ENCODE measurements at regions of chr9 and their contacts with region 1.

Region 1: GRCh38 chr9:98074115-98074990 is 17.8 kb downstream of the NANS start:
- DNase-seq: peak; percentile 49
- H3K4me3 Mint-ChIP-seq: no peak overlapping the region
- H3K27ac Mint-ChIP-seq: peak overlapping the region; percentile 84
- H3K4me1 Mint-ChIP-seq: peaks cover 18% of the 10 kb centered on the region
- H3K27me3 Mint-ChIP-seq: no peaks in the 10 kb centered on the region

Region 2: GRCh38 chr9:98095431-98095830 is 21.1 kb after region 1 on chr9:
- intact Hi-C with region 1: no loop called
- DNase-seq: no peak
- H3K4me3 Mint-ChIP-seq: no peak overlapping the region
- H3K27ac Mint-ChIP-seq: no peak overlapping the region
- H3K4me1 Mint-ChIP-seq: peaks cover 39% of the 10 kb centered on the region
- H3K27me3 Mint-ChIP-seq: no peaks in the 10 kb centered on the region

Region 3: GRCh38 chr9:98192503-98193335 is 118.4 kb after region 1 on chr9 and contains the start of gene CORO2A:
- intact Hi-C with region 1: loop called (anchors 1 kb)
- DNase-seq: peak; percentile 59
- H3K4me3 Mint-ChIP-seq: peak within 1 kb of the TSS; percentile 83
- H3K27ac Mint-ChIP-seq: no peak within 1 kb of the TSS
- H3K4me1 Mint-ChIP-seq: peaks cover 9% of the 10 kb centered on the region
- H3K27me3 Mint-ChIP-seq: peaks cover 14% of the 10 kb centered on the region
- total RNA-seq, gene CORO2A: 0.87 and 0.96 TPM in 2 replicates

Region 4: DNA sequence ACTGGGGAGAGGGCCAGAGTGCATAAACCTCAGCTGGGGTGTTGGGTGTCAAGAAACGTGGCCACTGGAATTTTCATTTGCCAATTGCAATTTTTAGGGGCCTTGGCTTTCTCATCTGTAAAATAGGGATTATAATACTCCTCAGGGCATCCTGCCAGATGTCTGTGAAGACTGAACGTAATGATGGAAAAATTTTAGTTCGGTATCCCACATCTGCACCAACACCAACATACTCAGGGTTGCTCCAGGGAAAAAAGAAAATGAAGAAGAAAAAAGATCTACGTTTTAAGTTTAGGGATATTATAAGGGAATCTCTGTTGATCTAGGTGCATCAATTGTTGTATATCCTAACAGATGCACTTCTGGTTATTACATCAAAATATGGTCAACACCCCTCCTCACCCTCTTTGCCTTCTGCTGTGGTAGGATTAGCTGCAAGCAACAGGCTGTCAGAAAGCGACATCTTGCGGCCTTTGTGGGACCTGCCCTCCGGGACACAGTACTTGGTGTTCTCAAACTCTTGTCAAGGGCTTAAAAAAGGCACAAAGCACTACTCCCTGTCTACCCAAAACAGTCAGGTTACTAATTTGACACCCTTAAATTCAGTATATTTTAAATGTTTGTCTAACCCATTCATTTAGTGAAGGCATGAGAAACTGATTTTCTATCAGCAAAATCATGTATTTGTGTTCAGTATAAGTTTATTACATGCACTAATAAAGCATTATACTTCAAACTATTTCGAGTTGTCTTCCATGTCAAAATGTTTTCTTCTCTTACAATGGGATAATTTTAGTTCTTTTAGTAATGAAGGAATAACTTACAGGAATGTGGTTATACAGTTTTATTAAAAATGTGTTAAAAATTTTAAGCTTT is 189.4 kb after region 1 on chr9:
- intact Hi-C with region 1: loop called (anchors 1 kb)
- DNase-seq: peak; percentile 71
- H3K4me3 Mint-ChIP-seq: no peak overlapping the region
- H3K27ac Mint-ChIP-seq: no peak overlapping the region
- H3K4me1 Mint-ChIP-seq: no peaks in the 10 kb centered on the region
- H3K27me3 Mint-ChIP-seq: peaks cover 20% of the 10 kb centered on the region

Region 5: DNA sequence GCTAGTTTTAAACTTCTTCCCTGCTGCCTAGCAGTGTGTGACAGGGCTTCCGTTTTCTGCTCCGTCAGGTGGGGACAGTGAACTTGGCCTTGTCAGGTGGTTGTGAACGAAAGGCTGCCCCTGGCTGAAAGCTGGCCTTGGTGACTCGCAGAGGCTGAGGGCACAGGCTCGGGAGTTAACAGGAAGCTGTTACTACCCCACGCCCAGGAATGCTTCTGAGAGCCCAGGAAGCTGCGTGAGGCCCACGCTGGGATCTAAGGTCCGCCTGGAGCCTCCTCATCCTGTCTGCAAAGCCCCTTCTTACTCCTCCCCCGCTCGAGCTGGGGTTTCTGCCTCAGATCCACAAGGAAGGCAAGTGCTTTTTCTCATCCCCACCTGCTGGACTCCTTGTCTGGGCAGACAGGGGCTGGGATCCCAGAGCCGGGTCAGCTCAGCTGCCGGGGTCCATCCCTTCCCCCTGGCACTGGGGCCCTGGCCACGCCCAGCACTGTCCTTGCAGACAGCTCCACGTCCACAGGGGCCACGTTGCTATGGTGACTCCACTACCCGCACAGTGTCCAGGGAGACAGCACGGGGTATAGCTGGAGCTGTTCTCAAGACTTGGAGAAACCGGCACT is 305.8 kb after region 1 on chr9:
- intact Hi-C with region 1: no loop called
- DNase-seq: no peak
- H3K4me3 Mint-ChIP-seq: no peak overlapping the region
- H3K27ac Mint-ChIP-seq: no peak overlapping the region
- H3K4me1 Mint-ChIP-seq: no peaks in the 10 kb centered on the region
- H3K27me3 Mint-ChIP-seq: no peaks in the 10 kb centered on the region